Mammary epithelial cell (primary cell): ENCODE measurements at regions of chr6 and their contacts with region 1.

Region 1: GRCh38 chr6:149565527-149566409 is at the start of gene GINM1:
- DNase-seq: peak; percentile 95
- H3K4me3 ChIP-seq: peak within 1 kb of the TSS; percentile 74 to 95 (median 94)
- H3K27ac ChIP-seq: peak within 1 kb of the TSS; percentile 76
- H3K4me1 ChIP-seq: peaks cover 22% of the 10 kb centered on the region
- H3K27me3 ChIP-seq: no peaks in the 10 kb centered on the region
- CTCF ChIP-seq: peak; percentile 72 to 87
- total RNA-seq, gene GINM1: 33.0 to 34.0 TPM

Region 2: GRCh38 chr6:149648148-149649145 is 82.7 kb after region 1 on chr6 and contains the start of gene KATNA1:
- CTCF ChIA-PET with region 1: interaction called, 4 read pairs
- dilution Hi-C with region 1: no loop called
- in situ Hi-C with region 1: no loop called
- intact Hi-C with region 1: loop called (anchors 1 kb)
- DNase-seq: peak; percentile 93
- H3K4me3 ChIP-seq: peak within 1 kb of the TSS; percentile 62 to 73 (median 72)
- H3K27ac ChIP-seq: peak within 1 kb of the TSS; percentile 79
- H3K4me1 ChIP-seq: peaks cover 5% of the 10 kb centered on the region
- H3K27me3 ChIP-seq: no peaks in the 10 kb centered on the region
- CTCF ChIP-seq: no peak
- total RNA-seq, gene KATNA1: 19.3 to 21.3 TPM

Region 3: GRCh38 chr6:149717588-149718458 is 152.1 kb after region 1 on chr6 and contains the start of gene LATS1:
- CTCF ChIA-PET with region 1: no interaction called
- dilution Hi-C with region 1: no loop called
- in situ Hi-C with region 1: no loop called
- intact Hi-C with region 1: loop called (anchors 2 kb)
- DNase-seq: peak; percentile 91
- H3K4me3 ChIP-seq: peak within 1 kb of the TSS; percentile 66 to 92 (median 91)
- H3K27ac ChIP-seq: peak within 1 kb of the TSS; percentile 86
- H3K4me1 ChIP-seq: no peaks in the 10 kb centered on the region
- H3K27me3 ChIP-seq: no peaks in the 10 kb centered on the region
- CTCF ChIP-seq: no peak
- total RNA-seq, gene LATS1: 19.8 to 26.6 TPM

Region 4: DNA sequence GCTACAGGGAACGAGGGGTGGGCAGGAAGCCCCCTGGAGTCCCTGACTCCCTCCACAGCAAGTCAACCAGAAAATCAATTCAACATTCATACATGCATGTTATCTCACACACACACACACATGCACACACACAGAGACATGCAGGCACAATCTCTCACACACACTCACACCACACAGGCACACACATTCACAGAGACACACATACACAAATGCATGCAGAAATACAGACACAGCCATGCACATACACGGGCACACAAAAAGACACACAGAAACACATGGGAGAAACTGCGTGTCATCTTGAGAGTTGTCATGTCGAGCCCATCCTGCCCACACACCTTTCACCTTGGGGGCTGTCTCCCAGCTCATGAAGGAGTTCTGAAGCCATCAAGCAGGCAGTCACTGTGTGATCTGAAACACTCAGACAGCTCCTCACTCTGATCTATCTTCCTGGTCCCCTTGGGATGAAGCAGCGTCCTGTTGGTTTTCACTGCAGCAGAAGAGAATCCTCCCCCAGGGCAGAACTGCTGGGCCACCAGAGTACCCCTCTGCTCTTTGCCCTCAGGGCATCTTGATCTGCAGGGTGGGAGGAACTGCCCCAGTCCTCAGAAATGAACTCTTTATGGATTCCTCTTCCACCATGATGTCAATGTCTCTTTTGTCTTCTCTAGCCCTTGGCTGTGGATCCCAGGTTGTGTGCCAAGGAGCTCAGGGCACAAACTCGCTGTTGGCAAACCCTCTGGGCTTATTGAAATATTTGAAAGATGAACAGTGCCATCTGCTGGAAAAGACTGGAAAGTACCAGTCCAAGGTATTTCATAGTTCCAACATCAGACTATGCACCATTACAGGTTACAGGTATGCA is 450.8 kb after region 1 on chr6:
- CTCF ChIA-PET with region 1: no interaction called
- dilution Hi-C with region 1: no loop called
- in situ Hi-C with region 1: no loop called
- intact Hi-C with region 1: loop called (anchors 10 kb)
- DNase-seq: peak; percentile 56
- H3K4me3 ChIP-seq: no peak overlapping the region
- H3K27ac ChIP-seq: no peak overlapping the region
- H3K4me1 ChIP-seq: peaks cover 5% of the 10 kb centered on the region
- H3K27me3 ChIP-seq: peaks cover 2% of the 10 kb centered on the region
- CTCF ChIP-seq: peak; percentile 47 to 50